ENCODE measurements at regions of chr1 and their contacts with region 1.

Region 1: DNA sequence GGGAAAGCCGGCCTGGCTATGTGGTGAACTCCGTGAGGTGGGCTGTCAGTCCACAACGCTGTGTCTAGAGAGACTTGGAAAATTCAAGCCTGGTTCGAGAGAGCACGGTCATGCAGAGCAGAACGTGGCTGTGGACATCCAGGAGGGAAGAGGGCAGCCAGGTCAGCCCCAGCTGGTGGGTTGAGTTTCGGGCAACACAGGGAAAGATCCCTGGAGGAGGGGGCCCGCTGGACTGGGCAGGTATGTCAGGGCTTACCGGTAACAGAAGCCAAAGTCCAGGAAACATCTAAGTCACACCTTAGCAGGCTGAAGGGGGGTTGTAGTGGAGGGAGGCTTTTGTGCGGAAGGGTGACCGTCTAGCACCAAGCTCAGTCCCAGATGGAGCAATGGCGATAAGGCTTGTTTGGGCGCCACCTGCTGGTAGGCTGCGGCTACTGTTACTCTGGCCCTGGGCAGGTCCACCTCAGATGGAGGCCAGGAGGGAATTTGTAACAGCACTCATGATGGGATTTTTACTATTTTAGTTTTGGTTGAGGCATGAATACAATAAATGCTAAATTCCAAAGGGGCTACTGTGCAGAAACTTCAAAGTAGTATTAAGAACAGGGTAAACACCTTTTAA is 143.3 kb upstream of the ZNF644 start:
- DNase-seq: peak; percentile 45
- ATAC-seq: peak; percentile 93
- H3K4me3 ChIP-seq: no peak overlapping the region
- H3K27ac ChIP-seq: no peak overlapping the region
- H3K4me1 ChIP-seq: no peaks in the 10 kb centered on the region
- H3K27me3 ChIP-seq: no peaks in the 10 kb centered on the region; the same call in 1 of the 2 replicates
- CTCF ChIP-seq: peak; percentile 88
- POLR2A ChIP-seq: no peak
- RAD21 ChIP-seq: peak; percentile 74

Region 2: GRCh38 chr1:90045853-90046563 is 1119.1 kb before region 1 on chr1:
- CTCF ChIA-PET with region 1: no interaction called
- POLR2A ChIA-PET with region 1: no interaction called
- dilution Hi-C with region 1: no loop called
- in situ Hi-C with region 1: no loop called
- intact Hi-C with region 1: loop called (anchors 5 kb)
- DNase-seq: peak; percentile 21
- ATAC-seq: peak; percentile 48
- H3K4me3 ChIP-seq: no peak overlapping the region
- H3K27ac ChIP-seq: no peak overlapping the region
- H3K4me1 ChIP-seq: no peaks in the 10 kb centered on the region
- H3K27me3 ChIP-seq: peaks cover 10% of the 10 kb centered on the region
- CTCF ChIP-seq: peak; percentile 61
- POLR2A ChIP-seq: no peak
- RAD21 ChIP-seq: peak; percentile 57

Region 3: GRCh38 chr1:90579212-90579802 is 585.8 kb before region 1 on chr1:
- CTCF ChIA-PET with region 1: no interaction called
- POLR2A ChIA-PET with region 1: no interaction called
- dilution Hi-C with region 1: no loop called
- in situ Hi-C with region 1: no loop called
- intact Hi-C with region 1: loop called (anchors 1 kb)
- DNase-seq: peak; percentile 40
- ATAC-seq: peak; percentile 54; the same call in 1 of the 2 replicates
- H3K4me3 ChIP-seq: no peak overlapping the region
- H3K27ac ChIP-seq: no peak overlapping the region
- H3K4me1 ChIP-seq: no peaks in the 10 kb centered on the region
- H3K27me3 ChIP-seq: no peaks in the 10 kb centered on the region
- CTCF ChIP-seq: peak; percentile 56
- POLR2A ChIP-seq: no peak
- RAD21 ChIP-seq: peak; percentile 50

Region 4: GRCh38 chr1:90964444-90965035 is 200.6 kb before region 1 on chr1:
- CTCF ChIA-PET with region 1: no interaction called
- POLR2A ChIA-PET with region 1: no interaction called
- dilution Hi-C with region 1: no loop called
- in situ Hi-C with region 1: no loop called
- intact Hi-C with region 1: loop called (anchors 10 kb)
- DNase-seq: peak; percentile 21
- ATAC-seq: peak; percentile 75
- H3K4me3 ChIP-seq: no peak overlapping the region
- H3K27ac ChIP-seq: no peak overlapping the region
- H3K4me1 ChIP-seq: no peaks in the 10 kb centered on the region
- H3K27me3 ChIP-seq: no peaks in the 10 kb centered on the region
- CTCF ChIP-seq: peak; percentile 54
- POLR2A ChIP-seq: no peak
- RAD21 ChIP-seq: peak; percentile 52

Region 5: GRCh38 chr1:91148641-91149069 is 16.5 kb before region 1 on chr1:
- CTCF ChIA-PET with region 1: interaction called, 13 read pairs
- POLR2A ChIA-PET with region 1: no interaction called
- dilution Hi-C with region 1: no loop called
- in situ Hi-C with region 1: no loop called
- intact Hi-C with region 1: no loop called
- DNase-seq: no peak
- ATAC-seq: peak; percentile 46
- H3K4me3 ChIP-seq: no peak overlapping the region
- H3K27ac ChIP-seq: no peak overlapping the region
- H3K4me1 ChIP-seq: no peaks in the 10 kb centered on the region
- H3K27me3 ChIP-seq: no peaks in the 10 kb centered on the region
- CTCF ChIP-seq: no peak
- POLR2A ChIP-seq: no peak
- RAD21 ChIP-seq: no peak

Region 6: DNA sequence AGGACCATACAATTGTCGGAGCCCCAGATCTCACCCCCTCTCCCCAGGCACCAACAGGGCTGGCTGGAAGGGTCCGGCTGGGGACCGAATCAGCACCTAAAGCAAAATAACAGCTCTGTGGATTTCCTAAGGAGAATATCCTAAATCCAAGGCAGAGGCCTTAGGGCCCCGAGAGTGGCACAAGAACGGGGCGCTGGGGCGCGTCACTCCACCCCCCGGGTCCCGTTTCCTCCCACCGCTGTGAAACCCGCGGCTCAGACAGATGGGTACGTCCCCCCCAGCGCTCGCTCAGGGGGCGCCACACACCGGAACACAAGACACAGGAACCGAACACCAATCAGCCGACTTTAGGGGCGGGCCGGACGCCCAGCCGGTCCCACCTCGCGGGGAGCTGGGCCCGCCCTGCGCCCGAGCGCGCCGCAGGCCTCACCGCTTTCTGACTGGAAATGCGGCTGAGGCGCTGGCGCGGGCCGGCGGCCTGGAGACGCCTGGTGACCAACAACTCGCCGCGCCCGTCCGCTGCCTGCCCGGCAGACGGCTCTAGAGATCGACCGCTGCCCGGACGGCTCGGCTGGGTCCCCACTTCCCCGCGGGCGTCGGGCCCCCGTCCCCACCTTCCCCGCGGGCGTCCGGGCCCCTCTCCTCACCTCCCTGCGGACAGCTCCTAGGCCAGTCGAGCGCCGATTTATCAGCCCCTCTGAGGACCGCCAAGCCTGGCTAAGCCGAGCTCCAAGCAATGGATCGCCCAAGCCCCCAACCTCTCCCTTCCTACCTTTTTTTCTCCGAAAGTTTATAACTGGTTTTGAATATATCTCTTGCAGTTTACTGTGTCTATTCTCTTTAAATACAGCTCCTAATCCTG is 239.2 kb after region 1 on chr1 and contains the start of gene HFM1:
- CTCF ChIA-PET with region 1: interaction called, 4 read pairs
- POLR2A ChIA-PET with region 1: no interaction called
- dilution Hi-C with region 1: no loop called
- in situ Hi-C with region 1: no loop called
- intact Hi-C with region 1: loop called (anchors 2 kb)
- DNase-seq: peak; percentile 69
- ATAC-seq: peak; percentile 99
- H3K4me3 ChIP-seq: peak within 1 kb of the TSS; percentile 52
- H3K27ac ChIP-seq: no peak within 1 kb of the TSS; the same call in 1 of the 2 replicates
- H3K4me1 ChIP-seq: no peaks in the 10 kb centered on the region
- H3K27me3 ChIP-seq: no peaks in the 10 kb centered on the region; the same call in 1 of the 2 replicates
- CTCF ChIP-seq: no peak
- POLR2A ChIP-seq: no peak
- RAD21 ChIP-seq: no peak
- total RNA-seq, gene HFM1: 0.18 and 0.83 TPM in 2 replicates